ENCODE measurements at regions of chr10 and their contacts with region 1.

Region 1: GRCh38 chr10:6175329-6176055 is 27.2 kb upstream of the PFKFB3 start:
- DNase-seq: no peak
- ATAC-seq: no peak

Region 2: DNA sequence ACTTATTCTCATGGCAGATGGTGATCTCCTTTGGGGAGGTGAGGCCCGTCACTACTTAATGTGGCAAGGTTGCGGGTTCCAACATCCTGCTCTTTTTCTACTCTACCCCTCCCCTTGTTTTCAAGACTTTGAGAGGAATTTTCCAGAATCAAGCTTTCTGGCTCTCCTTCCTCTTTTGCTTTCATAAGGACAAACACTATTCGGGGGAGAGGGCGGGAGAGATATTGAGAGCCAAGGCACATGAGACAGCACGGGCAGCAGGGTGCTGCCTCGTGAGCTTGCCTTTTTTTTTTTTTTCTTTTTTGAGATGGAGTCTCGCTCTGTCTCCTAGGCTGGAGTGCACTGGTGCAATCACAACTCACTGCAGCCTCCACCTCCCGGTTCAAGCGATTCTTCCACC is 20.4 kb after region 1 on chr10:
- intact Hi-C with region 1: loop called (anchors 2 kb)
- DNase-seq: no peak
- ATAC-seq: peak; percentile 47

Region 3: DNA sequence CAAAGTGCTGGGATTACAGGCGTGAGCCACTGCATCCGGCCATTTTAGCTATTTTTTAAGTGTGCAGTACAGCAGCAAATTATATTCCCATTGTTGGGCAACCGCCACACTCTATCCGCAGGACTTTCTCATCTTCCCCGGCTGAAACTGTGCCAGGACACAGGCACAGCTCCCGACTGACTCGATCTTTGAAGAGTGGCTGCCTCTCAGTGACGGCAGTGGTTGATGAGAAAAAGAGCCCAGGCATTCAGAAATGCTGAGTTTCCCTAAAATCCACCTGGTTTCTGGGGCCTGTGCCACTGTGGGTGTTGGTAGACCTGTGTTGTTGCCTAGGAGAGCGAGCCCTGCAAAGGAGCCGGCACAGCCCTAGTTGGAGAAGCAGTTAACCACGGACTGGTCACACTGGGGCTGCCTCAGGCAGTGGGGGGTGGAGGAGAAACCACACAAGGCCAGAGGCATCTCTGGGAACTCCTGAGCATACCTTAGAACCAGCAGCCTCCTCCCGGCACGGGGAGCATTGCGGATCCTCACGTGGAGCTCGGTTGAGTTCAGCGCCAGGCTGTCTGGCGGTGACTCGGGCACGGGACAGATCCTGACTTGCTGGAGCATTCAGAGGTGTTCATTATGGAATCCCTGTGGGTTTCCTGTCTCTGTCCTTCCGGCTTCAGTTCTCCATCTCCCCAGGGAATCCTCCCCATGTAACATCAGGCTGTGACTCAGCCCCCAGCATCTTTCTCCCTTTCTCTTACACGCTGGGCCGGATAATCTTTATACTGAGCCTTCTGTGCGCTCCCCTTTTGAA is 43.4 kb after region 1 on chr10:
- intact Hi-C with region 1: no loop called
- DNase-seq: no peak
- ATAC-seq: no peak